Transverse colon (tissue), 4 donors: ENCODE measurements at regions of chr1 and their contacts with region 1.

Region 1: DNA sequence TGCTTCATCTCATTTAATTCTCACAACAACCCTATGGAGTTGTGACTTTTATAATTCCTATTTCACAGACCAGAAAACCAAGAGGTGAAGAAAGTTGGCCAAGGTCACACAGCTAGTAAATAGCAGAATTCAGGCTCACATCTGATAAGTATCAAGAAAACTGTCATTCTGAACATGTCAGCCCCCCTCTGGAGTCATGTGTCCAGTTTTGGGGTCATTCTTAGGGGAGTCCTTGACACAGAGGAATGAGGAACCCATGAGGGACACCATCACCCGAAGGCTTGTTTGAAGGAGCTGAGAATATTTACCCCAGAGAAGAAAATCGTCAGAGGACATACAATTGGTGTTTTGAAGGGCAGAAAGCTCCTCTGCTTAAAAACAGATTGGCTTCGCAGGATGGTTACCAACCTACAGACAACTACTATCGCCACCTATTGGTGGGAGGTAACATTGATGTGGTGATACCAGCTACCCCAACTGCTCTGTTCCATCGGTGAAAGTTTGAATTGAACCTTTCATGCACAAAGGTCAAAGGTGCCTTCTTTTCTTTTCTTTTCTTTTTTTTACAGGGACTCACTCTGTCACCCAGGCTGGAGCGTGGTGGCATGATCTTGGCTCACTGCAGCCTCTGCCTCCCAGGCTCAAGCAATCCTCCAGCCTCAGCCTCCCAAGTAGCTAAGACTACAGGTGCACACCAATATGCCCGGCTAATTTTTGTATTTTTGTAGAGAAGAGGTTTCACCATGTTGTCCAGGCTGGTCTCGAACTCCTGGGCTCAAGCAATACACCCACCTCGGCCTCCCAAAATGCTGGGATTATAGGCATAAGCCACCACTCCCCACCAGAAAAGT is 31.3 kb downstream of the NCMAP start:
- DNase-seq: peak; percentile 39
- H3K4me3 ChIP-seq: no peak overlapping the region
- H3K27ac ChIP-seq: no peak overlapping the region
- H3K4me1 ChIP-seq: peaks cover 0 to 4% (median 1%) of the 10 kb centered on the region in 4 donors
- H3K27me3 ChIP-seq: no peaks in the 10 kb centered on the region
- CTCF ChIP-seq: peak; percentile 61 to 86 (median 75)
- EP300 ChIP-seq: no peak
- POLR2A ChIP-seq: no peak

Region 2: DNA sequence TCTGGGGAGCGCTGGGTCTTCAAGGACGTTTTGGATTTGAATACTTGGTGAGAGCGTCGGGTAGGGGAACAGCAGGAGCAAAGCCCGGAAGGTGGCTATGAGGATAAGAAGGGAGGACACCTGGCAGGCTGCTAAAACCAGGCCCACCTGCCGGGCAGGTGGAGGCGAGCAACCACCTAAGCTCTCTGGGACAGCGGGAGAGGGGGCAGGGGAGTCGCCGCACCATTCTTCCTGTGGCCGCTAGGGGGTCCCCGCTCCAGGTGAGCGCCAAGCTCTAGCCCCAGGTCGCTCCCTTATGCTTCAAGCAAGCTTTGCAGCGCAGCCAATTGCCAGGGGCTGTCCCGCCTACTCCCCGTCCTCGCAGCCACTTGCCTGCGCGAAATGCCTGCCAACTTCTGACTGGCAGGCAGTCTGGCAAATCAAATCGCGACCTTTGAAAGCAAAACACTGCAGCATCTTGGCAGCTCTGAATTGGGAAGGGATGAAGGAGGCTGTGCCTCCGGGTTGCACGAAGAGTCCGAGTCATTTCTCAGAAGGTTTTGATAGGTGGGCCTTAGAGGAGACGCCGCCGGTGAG is 171.8 kb before region 1 on chr1 and contains the start of gene NIPAL3:
- in situ Hi-C with region 1: loop called in 1 of 4 experiments (anchors 10 kb)
- intact Hi-C with region 1: no loop called
- DNase-seq: peak; percentile 98
- H3K4me3 ChIP-seq: peak within 1 kb of the TSS; percentile 47 to 68 (median 56)
- H3K27ac ChIP-seq: peak within 1 kb of the TSS; percentile 83 to 89 (median 86)
- H3K4me1 ChIP-seq: peaks cover 16 to 73% (median 54%) of the 10 kb centered on the region in 4 donors
- H3K27me3 ChIP-seq: no peaks in the 10 kb centered on the region
- CTCF ChIP-seq: peak; percentile 77 to 98 (median 91)
- EP300 ChIP-seq: no peak
- POLR2A ChIP-seq: peak; percentile 49
- total RNA-seq, gene NIPAL3: 34.8 to 55.8 (median 46.8) TPM

Region 3: DNA sequence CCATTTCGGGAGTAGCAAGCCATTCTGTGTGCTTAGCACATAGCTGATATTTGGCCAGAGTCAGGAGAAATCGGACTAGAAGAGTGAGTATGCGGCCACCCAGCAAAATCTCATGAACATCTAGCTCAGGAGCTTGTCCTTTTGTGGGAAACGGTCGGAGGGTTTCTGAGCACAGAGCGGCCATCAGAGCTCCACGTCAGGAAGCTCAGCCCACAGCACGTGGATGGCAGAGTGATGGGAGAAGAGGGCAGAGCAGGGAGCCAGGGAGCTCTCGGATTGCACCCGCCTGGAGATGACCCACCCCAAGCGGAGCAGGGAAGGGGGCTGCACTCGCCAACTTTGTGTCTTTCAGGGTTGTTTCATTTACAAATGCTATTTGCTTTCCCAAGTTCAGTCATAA is 70.7 kb before region 1 on chr1:
- in situ Hi-C with region 1: no loop called
- intact Hi-C with region 1: no loop called
- DNase-seq: no peak
- H3K4me3 ChIP-seq: no peak overlapping the region
- H3K27ac ChIP-seq: no peak overlapping the region
- H3K4me1 ChIP-seq: no peaks in the 10 kb centered on the region
- H3K27me3 ChIP-seq: no peaks in the 10 kb centered on the region
- CTCF ChIP-seq: no peak
- EP300 ChIP-seq: no peak
- POLR2A ChIP-seq: no peak

Region 4: DNA sequence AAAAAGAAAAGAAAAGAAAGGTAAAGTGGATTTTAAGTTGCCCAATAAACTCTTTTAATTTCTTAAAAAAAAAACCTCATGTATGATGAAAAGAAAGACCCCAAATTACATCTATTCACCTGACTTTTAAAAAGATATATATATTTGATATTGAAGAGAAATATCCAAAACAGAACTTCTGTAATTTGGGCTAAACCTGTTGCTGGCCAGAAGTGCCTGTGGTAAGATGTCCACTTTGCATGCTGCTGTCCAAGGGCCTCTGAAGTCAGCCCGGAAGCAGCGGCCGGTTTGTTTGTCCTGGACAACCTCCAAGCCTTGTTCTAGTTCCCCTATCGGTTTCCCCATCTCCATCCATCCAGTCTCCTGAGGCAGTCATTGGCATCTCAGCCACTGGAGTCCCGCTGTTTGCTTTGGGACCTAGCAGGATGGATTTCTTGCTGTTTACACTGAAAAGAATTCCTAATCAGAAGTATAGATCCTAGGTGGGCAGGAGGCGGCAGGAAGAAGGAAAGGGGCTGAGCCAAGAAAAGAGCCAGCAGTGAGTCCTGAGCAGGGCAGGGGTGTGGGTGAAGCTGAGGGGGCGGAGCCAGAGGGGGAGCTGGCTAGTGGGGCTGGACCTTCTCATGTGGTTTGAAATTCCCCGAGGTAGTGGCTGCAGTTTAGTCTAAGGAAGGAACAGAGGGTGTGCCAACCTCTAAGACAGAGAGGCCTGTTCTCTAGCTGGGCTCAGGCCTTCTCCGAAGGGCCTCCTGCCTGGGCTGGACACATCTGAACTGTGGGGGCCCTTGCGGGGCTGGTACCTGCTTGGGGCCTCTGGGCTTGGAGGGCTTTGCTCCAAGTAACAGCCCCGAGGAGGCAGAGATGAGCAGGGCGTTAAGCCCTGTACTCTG is 28.0 kb before region 1 on chr1:
- in situ Hi-C with region 1: no loop called
- intact Hi-C with region 1: no loop called
- DNase-seq: peak; percentile 47
- H3K4me3 ChIP-seq: no peak overlapping the region
- H3K27ac ChIP-seq: no peak overlapping the region
- H3K4me1 ChIP-seq: peaks cover 0 to 13% (median 6%) of the 10 kb centered on the region in 4 donors
- H3K27me3 ChIP-seq: peaks cover 33% of the 10 kb centered on the region
- CTCF ChIP-seq: no peak
- EP300 ChIP-seq: no peak
- POLR2A ChIP-seq: no peak